HEK293T (cell line): ENCODE measurements at regions of chr4 and their contacts with region 1.

Region 1: GRCh38 chr4:143335979-143336780 is 496 bp upstream of the GAB1 start:
- DNase-seq: peak; percentile 79

Region 2: DNA sequence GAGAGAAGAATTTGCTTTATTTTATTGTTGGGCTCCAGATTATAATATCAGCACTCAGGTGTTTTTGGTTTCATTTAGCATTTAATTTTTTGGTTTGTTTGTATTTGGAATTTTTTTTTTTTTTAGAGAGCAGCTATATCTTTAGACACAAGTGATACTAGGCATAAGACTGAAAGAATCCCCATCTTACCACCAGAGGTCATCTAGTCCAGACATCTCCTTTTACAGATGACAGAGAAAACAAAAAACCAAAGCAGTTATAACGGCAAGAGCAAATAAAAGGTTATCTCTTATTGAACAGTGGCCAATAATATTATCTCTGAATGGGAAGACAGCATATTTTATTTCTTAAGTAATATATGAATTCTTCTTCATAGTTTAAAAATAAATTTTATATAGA is 128.6 kb before region 1 on chr4:
- CTCF ChIA-PET with region 1: no interaction called
- POLR2A ChIA-PET with region 1: no interaction called
- DNase-seq: no peak

Region 3: GRCh38 chr4:143346206-143346605 is 10.0 kb after region 1 on chr4:
- CTCF ChIA-PET with region 1: no interaction called
- POLR2A ChIA-PET with region 1: interaction called, 13 read pairs
- DNase-seq: no peak